ENCODE measurements at regions of chr1 and their contacts with region 1.

Region 1: GRCh38 chr1:35930593-35931445 is at the start of gene AGO3:
- DNase-seq: peak; percentile 90 to 92 (median 92)
- ATAC-seq: peak; percentile 87
- H3K4me3 ChIP-seq: peak within 1 kb of the TSS; percentile 86
- H3K27ac ChIP-seq: peak within 1 kb of the TSS; percentile 93
- H3K4me1 ChIP-seq: peaks cover 12 to 23% of the 10 kb centered on the region in 2 experiments
- H3K27me3 ChIP-seq: no peaks in the 10 kb centered on the region
- CTCF ChIP-seq: no peak
- EP300 ChIP-seq: no peak
- POLR2A ChIP-seq: peak; percentile 83
- RAD21 ChIP-seq: peak in 1 of 2 experiments; percentile 11; a peak in 1 of 4 replicates
- polyA plus RNA-seq, gene AGO3: 4.5 to 4.6 TPM

Region 2: GRCh38 chr1:35864813-35865212 is 66.0 kb before region 1 on chr1:
- CTCF ChIA-PET with region 1: interaction called, 3 read pairs
- POLR2A ChIA-PET with region 1: no interaction called
- in situ Hi-C with region 1: no loop called
- intact Hi-C with region 1: loop called (anchors 5 kb)
- DNase-seq: no peak
- ATAC-seq: no peak
- H3K4me3 ChIP-seq: no peak overlapping the region
- H3K27ac ChIP-seq: no peak overlapping the region
- H3K4me1 ChIP-seq: peaks cover 0 to 6% of the 10 kb centered on the region in 2 experiments; a peak in 1 of 5 replicates
- H3K27me3 ChIP-seq: no peaks in the 10 kb centered on the region
- CTCF ChIP-seq: no peak
- EP300 ChIP-seq: no peak
- POLR2A ChIP-seq: no peak
- RAD21 ChIP-seq: no peak

Region 3: GRCh38 chr1:35882945-35883634 is 47.7 kb before region 1 on chr1 and contains the start of gene AGO1:
- CTCF ChIA-PET with region 1: no interaction called
- POLR2A ChIA-PET with region 1: interaction called, 4 read pairs
- in situ Hi-C with region 1: no loop called
- intact Hi-C with region 1: loop called (anchors 1 kb)
- DNase-seq: peak; percentile 97 to 99 (median 99)
- ATAC-seq: peak; percentile 79
- H3K4me3 ChIP-seq: peak within 1 kb of the TSS; percentile 64
- H3K27ac ChIP-seq: peak within 1 kb of the TSS; percentile 73
- H3K4me1 ChIP-seq: peaks cover 47 to 72% of the 10 kb centered on the region in 2 experiments
- H3K27me3 ChIP-seq: no peaks in the 10 kb centered on the region
- CTCF ChIP-seq: peak; percentile 95 to 97 (median 97)
- EP300 ChIP-seq: no peak; the same call in 1 of the 2 replicates
- POLR2A ChIP-seq: peak; percentile 51; the same call in 1 of the 2 replicates
- RAD21 ChIP-seq: peak; percentile 56 to 73
- polyA plus RNA-seq, gene AGO1: 7.3 to 13.3 TPM

Region 4: DNA sequence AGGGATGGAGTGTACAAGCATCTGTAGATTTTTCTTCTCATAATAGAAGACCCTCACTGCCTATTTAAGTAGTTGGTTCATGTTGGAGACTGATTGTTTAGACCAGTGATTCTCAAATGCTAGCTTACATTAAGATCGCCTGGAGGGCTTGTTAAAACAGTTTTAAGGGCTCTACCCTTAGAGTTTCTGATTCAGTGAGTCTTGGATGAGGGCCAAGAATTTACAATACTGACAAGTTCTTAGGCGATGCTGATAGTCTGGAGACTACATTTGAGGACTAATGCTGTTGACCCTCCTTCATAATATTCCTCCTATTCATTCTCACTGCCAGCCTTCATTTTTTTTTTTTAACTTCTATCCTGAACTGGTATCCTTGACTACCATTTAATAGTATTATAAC is 15.1 kb before region 1 on chr1:
- CTCF ChIA-PET with region 1: no interaction called
- POLR2A ChIA-PET with region 1: interaction called, 22 read pairs
- in situ Hi-C with region 1: no loop called
- intact Hi-C with region 1: no loop called
- DNase-seq: no peak
- ATAC-seq: no peak
- H3K4me3 ChIP-seq: no peak overlapping the region
- H3K27ac ChIP-seq: no peak overlapping the region
- H3K4me1 ChIP-seq: peaks cover 0 to 11% of the 10 kb centered on the region in 2 experiments; a peak in 3 of 5 replicates
- H3K27me3 ChIP-seq: no peaks in the 10 kb centered on the region
- CTCF ChIP-seq: no peak
- EP300 ChIP-seq: no peak
- POLR2A ChIP-seq: no peak
- RAD21 ChIP-seq: no peak

Region 5: DNA sequence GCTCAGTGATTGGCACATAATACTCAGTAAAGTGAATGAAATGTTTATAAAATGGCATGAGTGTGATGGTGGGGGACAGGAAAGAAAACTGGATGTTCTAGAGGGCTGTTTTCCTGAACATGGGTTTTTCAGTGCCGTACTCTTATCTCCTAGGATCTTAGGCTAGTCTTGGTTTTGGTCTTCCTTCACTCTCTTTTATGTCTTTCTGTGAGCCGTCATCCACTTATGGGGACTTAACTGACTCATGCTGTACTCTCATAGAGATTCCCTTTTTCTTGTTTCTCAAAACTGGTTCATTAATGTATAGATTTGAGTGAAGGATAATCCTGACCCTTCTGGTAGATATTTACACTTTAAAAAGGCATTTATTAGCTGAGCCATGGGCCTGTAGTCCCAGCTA is 16.7 kb after region 1 on chr1:
- CTCF ChIA-PET with region 1: no interaction called
- POLR2A ChIA-PET with region 1: interaction called, 10 read pairs
- in situ Hi-C with region 1: no loop called
- intact Hi-C with region 1: no loop called
- DNase-seq: no peak
- ATAC-seq: no peak
- H3K4me3 ChIP-seq: no peak overlapping the region
- H3K27ac ChIP-seq: peak overlapping the region; percentile 4; the same call in 1 of the 3 replicates
- H3K4me1 ChIP-seq: peaks cover 0 to 3% of the 10 kb centered on the region in 2 experiments; a peak in 2 of 5 replicates
- H3K27me3 ChIP-seq: no peaks in the 10 kb centered on the region
- CTCF ChIP-seq: no peak
- EP300 ChIP-seq: no peak
- POLR2A ChIP-seq: no peak
- RAD21 ChIP-seq: no peak

Region 6: DNA sequence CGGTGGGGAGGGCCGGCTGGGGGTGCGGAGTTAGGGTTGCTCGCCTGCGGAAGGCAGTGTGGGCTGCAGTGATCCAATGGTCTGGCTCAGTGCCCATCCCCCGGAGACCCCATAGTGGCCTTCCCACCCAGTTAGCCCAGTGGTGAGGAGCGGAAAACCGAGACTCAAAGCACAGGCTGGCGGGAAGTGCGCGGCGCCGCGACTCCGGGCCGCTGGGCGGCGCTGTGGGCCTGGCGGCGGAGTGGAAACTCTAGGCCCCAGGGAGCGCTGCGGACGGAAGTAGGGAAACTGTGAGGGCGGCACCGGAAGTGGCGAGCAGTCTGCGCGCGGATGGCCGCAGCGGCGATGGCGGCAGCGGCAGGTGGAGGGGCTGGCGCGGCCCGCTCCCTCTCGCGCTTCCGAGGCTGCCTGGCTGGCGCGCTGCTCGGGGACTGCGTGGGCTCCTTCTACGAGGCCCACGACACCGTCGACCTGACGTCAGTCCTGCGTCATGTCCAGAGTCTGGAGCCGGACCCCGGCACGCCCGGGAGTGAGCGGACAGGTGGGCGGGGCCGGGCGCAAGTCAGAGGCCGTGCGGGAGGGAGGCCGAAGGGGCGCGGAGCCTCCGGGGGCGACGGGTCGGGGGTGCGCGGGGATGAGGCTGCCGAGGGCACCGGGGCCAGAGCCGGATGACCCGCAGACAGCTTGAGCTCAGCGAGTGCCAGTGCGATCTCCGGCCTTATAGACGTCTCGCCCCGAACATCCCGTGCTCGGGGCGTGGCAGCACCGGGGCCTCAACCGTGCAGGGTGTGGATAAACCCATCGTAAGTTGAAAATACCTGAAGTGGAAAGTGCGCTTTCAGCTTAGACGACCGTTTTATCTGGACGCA is 158.0 kb after region 1 on chr1 and contains the start of gene ADPRS:
- CTCF ChIA-PET with region 1: no interaction called
- POLR2A ChIA-PET with region 1: no interaction called
- in situ Hi-C with region 1: no loop called
- intact Hi-C with region 1: loop called (anchors 5 kb)
- DNase-seq: peak; percentile 95 to 97 (median 96)
- ATAC-seq: peak; percentile 94
- H3K4me3 ChIP-seq: peak within 1 kb of the TSS; percentile 92
- H3K27ac ChIP-seq: peak within 1 kb of the TSS; percentile 70
- H3K4me1 ChIP-seq: peaks cover 18 to 40% of the 10 kb centered on the region in 2 experiments; a peak in 4 of 5 replicates
- H3K27me3 ChIP-seq: no peaks in the 10 kb centered on the region
- CTCF ChIP-seq: peak; percentile 97 to 99 (median 98)
- EP300 ChIP-seq: peak; percentile 56
- POLR2A ChIP-seq: peak; percentile 98
- RAD21 ChIP-seq: peak; percentile 40 to 63; a peak in 3 of 4 replicates
- polyA plus RNA-seq, gene ADPRS: 5.9 to 8.4 TPM

Region 7: DNA sequence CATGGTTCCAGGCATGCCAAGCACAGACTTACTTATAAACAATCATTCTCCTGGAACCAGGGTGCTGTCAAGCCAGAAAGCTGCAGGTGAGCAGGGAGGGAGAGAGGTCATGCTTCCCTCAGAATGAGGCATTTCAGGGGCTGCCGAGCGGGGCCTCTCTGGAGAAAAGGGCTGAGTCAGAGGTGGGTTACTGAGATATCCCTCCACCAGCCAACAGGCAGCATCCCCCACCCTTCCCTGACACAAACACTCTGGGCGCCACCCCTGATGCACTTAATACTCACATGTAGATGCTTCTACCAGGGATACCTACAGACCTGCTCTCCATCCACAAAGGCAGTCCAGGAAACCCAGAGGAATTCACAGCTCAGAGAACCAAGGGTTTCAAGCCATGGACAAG is 441.8 kb after region 1 on chr1:
- CTCF ChIA-PET with region 1: no interaction called
- POLR2A ChIA-PET with region 1: no interaction called
- in situ Hi-C with region 1: no loop called
- intact Hi-C with region 1: no loop called
- DNase-seq: peak in 3 of 4 experiments; percentile 40 to 85 (median 77)
- ATAC-seq: peak; percentile 6
- H3K4me3 ChIP-seq: peak overlapping the region; percentile 37; the same call in 1 of the 2 replicates
- H3K27ac ChIP-seq: peak overlapping the region; percentile 98
- H3K4me1 ChIP-seq: peaks cover 64% of the 10 kb centered on the region in 2 experiments
- H3K27me3 ChIP-seq: no peaks in the 10 kb centered on the region
- CTCF ChIP-seq: no peak
- EP300 ChIP-seq: no peak; the same call in 1 of the 2 replicates
- POLR2A ChIP-seq: peak; percentile 49; the same call in 1 of the 2 replicates
- RAD21 ChIP-seq: no peak

Measured in K562 (cell line).